Right ventricle myocardium inferior (tissue), 1 donor: ENCODE measurements at regions of chr2 and their contacts with region 1.

Region 1: GRCh38 chr2:137964066-137964858 is at the start of gene HNMT:
- DNase-seq: peak; percentile 73
- ATAC-seq: peak; percentile 63
- total RNA-seq, gene HNMT: 13.0 TPM

Region 2: GRCh38 chr2:137992039-137992646 is 27.9 kb after region 1 on chr2:
- intact Hi-C with region 1: no loop called
- DNase-seq: no peak
- ATAC-seq: no peak

Region 3: DNA sequence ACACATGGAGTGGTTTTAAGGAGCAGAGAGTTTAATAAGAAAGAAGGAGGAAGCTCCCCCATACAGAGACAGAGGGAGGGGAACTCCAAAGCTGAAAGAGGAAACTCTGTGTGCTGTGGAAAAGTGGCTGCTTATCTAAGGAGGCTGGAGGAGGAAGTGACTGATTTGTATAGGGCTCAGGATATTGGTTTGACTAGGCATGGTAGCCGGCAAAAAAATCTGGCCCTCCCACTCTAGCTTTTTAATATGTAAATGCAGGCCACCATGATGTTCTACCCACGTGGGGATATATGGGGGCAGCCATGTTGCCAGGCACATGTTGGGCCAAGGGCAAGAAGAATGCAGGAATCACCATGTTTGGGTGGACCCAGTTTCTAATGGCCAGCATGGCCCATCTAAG is 64.3 kb after region 1 on chr2:
- intact Hi-C with region 1: loop called (anchors 2 kb)
- DNase-seq: no peak
- ATAC-seq: peak; percentile 44

Region 4: DNA sequence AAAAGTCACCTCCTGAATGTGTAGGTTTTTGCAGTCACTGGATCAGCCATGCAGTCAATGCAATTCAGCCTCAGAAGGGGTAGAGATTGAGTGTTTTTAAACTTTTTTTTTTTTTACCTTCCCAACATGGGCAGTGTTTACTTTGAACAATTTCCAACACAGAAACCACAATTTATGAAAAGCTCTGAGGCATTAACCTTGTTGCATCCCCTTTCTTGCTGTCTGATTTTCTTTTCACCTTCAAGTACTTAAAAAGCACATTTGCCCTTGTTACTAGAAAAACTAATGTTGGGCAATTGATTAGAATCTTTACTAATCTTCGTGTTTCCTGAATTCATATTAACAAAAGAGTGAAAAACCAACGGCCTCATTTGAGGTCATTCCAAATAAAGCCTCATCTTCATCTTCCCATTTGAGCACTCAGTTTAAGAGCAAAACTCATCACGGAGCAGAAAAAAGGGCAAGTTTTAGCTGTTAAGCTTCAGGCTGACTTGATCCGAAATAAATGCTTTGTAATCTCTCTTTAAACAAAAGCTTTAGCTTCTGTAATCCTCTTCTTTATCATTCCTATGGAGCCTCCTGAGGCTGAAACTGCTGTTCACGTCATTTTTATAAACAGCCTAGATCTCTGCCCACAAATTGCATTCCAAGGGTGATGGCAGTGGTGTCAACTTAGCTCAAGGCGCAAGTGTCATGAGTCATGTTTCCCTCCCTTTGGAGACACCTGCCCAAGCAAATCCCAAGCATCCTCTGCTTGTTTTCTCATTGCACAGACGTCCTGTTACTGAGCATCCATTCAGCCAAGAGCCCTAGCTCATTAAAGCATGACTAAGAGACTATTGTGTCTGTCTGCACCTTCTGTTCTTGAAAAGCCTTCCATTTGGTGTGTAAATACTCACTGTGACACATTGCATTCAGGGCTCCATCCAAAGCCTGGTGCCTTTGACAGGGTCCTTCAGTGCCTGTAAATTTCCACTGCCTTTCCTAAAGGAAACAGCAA is 107.8 kb after region 1 on chr2:
- intact Hi-C with region 1: loop called (anchors 10 kb)
- DNase-seq: no peak
- ATAC-seq: no peak

Region 5: GRCh38 chr2:138559641-138560040 is 595.4 kb after region 1 on chr2:
- intact Hi-C with region 1: no loop called
- DNase-seq: no peak
- ATAC-seq: no peak